ENCODE measurements at regions of chr10 and their contacts with region 1.

Region 1: DNA sequence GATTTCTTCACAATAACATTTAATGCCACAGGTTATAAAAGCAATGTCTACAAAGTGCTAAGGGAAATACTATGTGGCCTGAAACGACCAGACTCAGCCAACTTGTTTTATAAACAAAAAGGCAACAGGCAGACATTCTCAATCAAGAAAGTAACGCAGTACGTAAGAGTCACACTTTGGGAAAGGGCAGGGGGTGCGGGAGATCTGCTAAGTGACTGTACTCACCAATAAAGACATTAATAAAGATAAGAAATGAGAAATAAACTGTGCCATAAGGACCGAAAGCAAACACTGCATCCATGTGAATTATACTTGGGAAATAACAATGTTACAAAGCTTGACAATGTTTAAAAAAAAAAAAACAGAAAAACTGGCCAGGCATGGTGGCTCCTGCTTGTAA is 25.5 kb downstream of the NSUN6 start:
- DNase-seq: no peak
- ATAC-seq: no peak
- H3K4me3 Mint-ChIP-seq: no peak overlapping the region
- H3K27ac Mint-ChIP-seq: no peak overlapping the region
- H3K4me1 Mint-ChIP-seq: peaks cover 8% of the 10 kb centered on the region
- H3K27me3 Mint-ChIP-seq: no peaks in the 10 kb centered on the region
- CTCF ChIP-seq: no peak

Region 2: DNA sequence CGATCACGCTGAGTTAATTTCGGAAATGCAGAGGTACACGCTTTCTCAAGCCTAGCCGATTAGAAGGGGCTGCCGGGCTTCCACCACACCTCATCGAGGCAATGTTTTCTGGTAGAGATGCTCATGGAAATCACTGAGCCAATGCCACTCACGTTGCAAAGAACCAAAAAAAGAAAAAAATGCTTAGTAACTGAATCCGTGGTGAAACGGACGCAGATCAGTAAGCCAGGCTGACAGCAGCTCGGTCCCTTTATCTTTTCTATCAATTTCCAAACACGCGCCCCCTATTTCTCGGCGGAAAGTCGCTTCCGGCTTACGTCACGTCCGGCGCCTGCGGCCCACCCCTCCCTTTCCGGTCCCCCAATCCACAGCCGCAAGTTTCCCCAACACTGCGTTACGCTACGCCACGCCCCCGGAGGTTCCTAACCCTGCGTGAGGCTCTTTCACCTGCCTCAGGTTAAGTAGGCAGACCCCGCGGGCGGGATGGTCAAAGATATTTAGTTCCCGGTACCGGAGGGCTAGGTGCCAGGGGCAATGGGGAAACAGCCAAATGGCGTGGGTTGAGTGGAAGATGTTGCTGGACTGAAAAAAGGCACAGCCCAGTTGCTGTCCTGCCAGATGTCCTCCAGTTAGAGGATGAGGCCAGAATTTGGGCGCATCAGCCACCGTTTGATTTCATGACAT is 25.6 kb after region 1 on chr10 and contains the start of gene NSUN6:
- CTCF ChIA-PET with region 1: no interaction called
- POLR2A ChIA-PET with region 1: no interaction called
- intact Hi-C with region 1: loop called (anchors 1 kb)
- DNase-seq: peak; percentile 87
- ATAC-seq: peak; percentile 98
- H3K4me3 Mint-ChIP-seq: peak within 1 kb of the TSS; percentile 94
- H3K27ac Mint-ChIP-seq: peak within 1 kb of the TSS; percentile 92
- H3K4me1 Mint-ChIP-seq: peaks cover 38% of the 10 kb centered on the region
- H3K27me3 Mint-ChIP-seq: no peaks in the 10 kb centered on the region
- CTCF ChIP-seq: no peak
- total RNA-seq, gene NSUN6: 16.4 and 18.4 TPM in 2 replicates

Region 3: DNA sequence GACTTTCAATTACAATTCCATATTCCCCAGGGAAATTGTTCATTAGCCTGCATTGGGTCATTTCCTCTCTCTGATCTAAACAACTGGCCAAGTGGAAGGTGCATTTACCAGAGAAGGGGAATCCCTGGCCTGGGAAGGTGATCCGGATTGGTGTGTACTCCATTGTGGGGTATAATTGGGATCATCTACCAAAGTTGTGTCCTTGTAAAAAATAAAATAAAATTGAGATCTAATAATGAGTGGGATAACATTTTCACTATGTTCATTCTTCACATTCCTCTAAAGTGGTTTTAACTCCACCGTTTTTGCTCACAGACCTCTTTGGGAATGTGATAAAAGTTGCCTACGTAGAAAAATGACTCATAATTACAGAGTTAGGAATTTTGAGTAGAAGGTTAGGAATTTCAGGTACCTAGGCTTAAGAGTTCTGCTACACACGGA is 56.1 kb after region 1 on chr10:
- CTCF ChIA-PET with region 1: no interaction called
- POLR2A ChIA-PET with region 1: no interaction called
- intact Hi-C with region 1: no loop called
- DNase-seq: no peak
- ATAC-seq: no peak
- H3K4me3 Mint-ChIP-seq: no peak overlapping the region
- H3K27ac Mint-ChIP-seq: no peak overlapping the region
- H3K4me1 Mint-ChIP-seq: no peaks in the 10 kb centered on the region
- H3K27me3 Mint-ChIP-seq: no peaks in the 10 kb centered on the region
- CTCF ChIP-seq: no peak